ENCODE measurements at regions of chr1 and their contacts with region 1.

Region 1: GRCh38 chr1:77961392-77961791 is 17.5 kb downstream of the FUBP1 start:
- DNase-seq: no peak
- H3K4me3 Mint-ChIP-seq: no peak overlapping the region
- H3K27ac Mint-ChIP-seq: peak overlapping the region; percentile 51
- H3K4me1 Mint-ChIP-seq: peaks cover 38% of the 10 kb centered on the region
- H3K27me3 Mint-ChIP-seq: no peaks in the 10 kb centered on the region

Region 2: DNA sequence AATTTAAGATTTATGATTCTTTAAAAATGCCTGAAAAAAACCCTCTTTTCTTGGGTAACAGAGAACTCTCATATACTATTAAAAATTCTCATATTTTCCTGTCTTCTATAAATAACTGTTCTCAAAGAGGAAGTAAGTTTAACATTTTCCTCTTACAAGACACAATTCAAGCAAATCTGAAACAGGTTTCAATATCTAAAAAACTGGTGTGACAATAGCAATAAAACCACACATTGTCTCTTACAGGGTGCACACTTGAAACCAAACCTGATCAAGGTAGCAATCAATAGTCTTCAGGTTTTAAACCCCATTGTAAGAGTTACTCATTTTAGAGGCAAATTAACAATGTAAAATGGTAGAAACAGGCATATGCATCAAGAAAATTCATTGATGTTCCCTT is 10.5 kb before region 1 on chr1:
- CTCF ChIA-PET with region 1: interaction called, 3 read pairs
- intact Hi-C with region 1: loop called (anchors 1 kb)
- DNase-seq: no peak
- H3K4me3 Mint-ChIP-seq: no peak overlapping the region
- H3K27ac Mint-ChIP-seq: peak overlapping the region; percentile 69
- H3K4me1 Mint-ChIP-seq: peaks cover 43% of the 10 kb centered on the region
- H3K27me3 Mint-ChIP-seq: no peaks in the 10 kb centered on the region

Region 3: DNA sequence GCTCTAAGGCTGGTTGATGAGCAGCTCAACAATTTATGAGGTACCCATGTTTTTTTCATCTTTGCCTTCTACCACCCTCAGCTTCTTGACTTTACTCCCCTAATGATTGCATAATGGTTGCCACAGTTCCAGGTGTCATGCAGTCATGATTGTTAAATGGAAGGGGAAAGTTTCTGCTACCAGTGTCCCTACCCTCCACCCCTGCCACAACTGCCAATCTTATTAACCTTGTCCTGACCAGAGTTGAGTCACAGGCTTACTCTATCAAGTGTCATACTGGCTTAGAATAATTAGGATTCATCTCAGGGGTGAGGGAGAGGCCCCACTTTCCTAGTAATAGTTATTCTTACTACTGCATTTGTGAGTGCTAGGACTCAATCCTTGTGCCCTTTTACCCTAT is 25.4 kb after region 1 on chr1:
- CTCF ChIA-PET with region 1: no interaction called
- intact Hi-C with region 1: no loop called
- DNase-seq: peak; percentile 46
- H3K4me3 Mint-ChIP-seq: no peak overlapping the region
- H3K27ac Mint-ChIP-seq: no peak overlapping the region
- H3K4me1 Mint-ChIP-seq: peaks cover 56% of the 10 kb centered on the region
- H3K27me3 Mint-ChIP-seq: no peaks in the 10 kb centered on the region

Measured in activated naive CD4-positive, alpha-beta T cell treated with anti-CD3 and anti-CD28 coated beads for 36 hours (primary cell).